ENCODE measurements at regions of chr19 and their contacts with region 1.

Region 1: DNA sequence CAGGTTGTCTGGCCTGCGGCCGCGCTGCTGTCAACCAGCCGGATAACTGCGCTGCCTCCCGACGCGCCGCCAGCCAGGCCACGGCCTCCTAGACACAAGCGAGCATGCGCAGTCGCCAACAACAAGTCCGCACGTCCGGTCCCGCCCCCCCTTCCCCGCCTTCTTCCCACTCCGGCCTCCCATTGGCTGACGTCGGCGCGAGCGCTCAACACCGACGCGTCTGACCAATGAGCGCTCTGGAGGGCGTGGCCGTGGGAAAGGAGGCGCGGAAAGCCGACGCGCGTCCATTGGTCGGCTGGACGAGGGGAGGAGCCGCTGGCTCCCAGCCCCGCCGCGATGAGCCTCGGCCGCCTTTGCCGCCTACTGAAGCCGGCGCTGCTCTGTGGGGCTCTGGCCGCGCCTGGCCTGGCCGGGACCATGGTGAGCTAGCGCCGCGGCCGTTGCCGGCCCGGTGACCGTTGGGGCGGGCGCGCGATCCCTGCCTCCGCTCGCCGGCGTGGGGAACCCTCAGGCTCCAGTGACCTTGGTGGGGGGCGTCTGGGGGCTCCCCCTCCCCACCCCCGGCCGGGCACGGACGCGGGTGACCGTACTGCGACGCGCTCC is at the start of gene GPX4:
- DNase-seq: peak; percentile 93
- ATAC-seq: peak; percentile 86
- H3K4me3 Mint-ChIP-seq: peak within 1 kb of the TSS; percentile 81
- H3K27ac Mint-ChIP-seq: peak within 1 kb of the TSS; percentile 83
- H3K4me1 Mint-ChIP-seq: peaks cover 55% of the 10 kb centered on the region
- H3K27me3 Mint-ChIP-seq: no peaks in the 10 kb centered on the region
- CTCF ChIP-seq: no peak
- total RNA-seq, gene GPX4: 213 and 218 TPM in 2 replicates

Region 2: GRCh38 chr19:925526-926322 is 178.1 kb before region 1 on chr19 and contains the start of gene ARID3A:
- CTCF ChIA-PET with region 1: no interaction called
- POLR2A ChIA-PET with region 1: no interaction called
- intact Hi-C with region 1: loop called (anchors 10 kb)
- DNase-seq: peak; percentile 84
- ATAC-seq: peak; percentile 66
- H3K4me3 Mint-ChIP-seq: peak within 1 kb of the TSS; percentile 86
- H3K27ac Mint-ChIP-seq: peak within 1 kb of the TSS; percentile 82
- H3K4me1 Mint-ChIP-seq: peaks cover 22% of the 10 kb centered on the region
- H3K27me3 Mint-ChIP-seq: no peaks in the 10 kb centered on the region
- CTCF ChIP-seq: no peak
- total RNA-seq, gene ARID3A: 67.7 and 74.9 TPM in 2 replicates

Region 3: DNA sequence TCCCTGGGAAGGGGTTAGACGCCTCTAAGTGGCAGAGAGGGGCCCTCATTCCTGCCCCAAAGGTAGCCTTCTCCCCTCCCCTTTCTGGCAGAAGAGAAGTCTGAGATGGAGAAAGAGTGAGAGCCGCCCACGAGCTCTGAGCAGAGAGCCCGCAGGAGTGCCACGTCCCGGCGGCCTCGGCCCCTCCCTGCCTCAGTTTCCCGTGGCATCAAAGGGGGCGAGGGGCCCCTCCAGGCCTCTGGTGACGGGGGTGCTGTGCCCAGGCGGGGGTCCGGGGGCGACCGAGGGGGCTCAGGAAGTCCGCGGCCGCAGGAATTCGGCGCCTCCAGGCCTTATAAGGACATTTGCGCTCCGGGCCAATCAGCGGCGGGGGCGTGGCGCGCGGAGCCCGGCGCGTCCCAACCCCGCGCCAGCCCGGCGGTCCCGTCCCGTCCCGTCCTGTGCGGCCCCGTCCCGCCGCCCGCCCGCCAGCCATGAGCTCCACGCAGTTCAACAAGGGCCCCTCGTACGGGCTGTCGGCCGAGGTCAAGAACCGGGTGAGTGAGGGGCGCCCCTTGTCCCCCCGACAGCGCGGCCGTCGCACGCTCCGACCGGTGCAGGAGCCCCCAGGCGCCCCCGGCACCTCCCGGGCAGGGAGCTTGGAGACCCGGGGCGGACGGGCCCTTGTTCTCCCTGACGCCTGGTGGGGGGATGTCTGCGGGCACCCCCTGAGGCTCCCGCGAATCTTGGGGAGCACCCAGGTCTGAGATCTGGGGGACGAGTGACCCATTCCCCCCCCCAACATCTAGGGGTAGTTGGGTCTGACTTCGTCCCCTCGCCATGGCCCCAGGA is 77.4 kb before region 1 on chr19 and contains the start of gene CNN2:
- CTCF ChIA-PET with region 1: interaction called, 3 read pairs
- POLR2A ChIA-PET with region 1: interaction called, 5 read pairs
- intact Hi-C with region 1: loop called (anchors 1 kb)
- DNase-seq: peak; percentile 76
- ATAC-seq: peak; percentile 61
- H3K4me3 Mint-ChIP-seq: peak within 1 kb of the TSS; percentile 95
- H3K27ac Mint-ChIP-seq: peak within 1 kb of the TSS; percentile 91
- H3K4me1 Mint-ChIP-seq: peaks cover 29% of the 10 kb centered on the region
- H3K27me3 Mint-ChIP-seq: no peaks in the 10 kb centered on the region
- CTCF ChIP-seq: no peak
- total RNA-seq, gene CNN2: 352 and 371 TPM in 2 replicates

Region 4: DNA sequence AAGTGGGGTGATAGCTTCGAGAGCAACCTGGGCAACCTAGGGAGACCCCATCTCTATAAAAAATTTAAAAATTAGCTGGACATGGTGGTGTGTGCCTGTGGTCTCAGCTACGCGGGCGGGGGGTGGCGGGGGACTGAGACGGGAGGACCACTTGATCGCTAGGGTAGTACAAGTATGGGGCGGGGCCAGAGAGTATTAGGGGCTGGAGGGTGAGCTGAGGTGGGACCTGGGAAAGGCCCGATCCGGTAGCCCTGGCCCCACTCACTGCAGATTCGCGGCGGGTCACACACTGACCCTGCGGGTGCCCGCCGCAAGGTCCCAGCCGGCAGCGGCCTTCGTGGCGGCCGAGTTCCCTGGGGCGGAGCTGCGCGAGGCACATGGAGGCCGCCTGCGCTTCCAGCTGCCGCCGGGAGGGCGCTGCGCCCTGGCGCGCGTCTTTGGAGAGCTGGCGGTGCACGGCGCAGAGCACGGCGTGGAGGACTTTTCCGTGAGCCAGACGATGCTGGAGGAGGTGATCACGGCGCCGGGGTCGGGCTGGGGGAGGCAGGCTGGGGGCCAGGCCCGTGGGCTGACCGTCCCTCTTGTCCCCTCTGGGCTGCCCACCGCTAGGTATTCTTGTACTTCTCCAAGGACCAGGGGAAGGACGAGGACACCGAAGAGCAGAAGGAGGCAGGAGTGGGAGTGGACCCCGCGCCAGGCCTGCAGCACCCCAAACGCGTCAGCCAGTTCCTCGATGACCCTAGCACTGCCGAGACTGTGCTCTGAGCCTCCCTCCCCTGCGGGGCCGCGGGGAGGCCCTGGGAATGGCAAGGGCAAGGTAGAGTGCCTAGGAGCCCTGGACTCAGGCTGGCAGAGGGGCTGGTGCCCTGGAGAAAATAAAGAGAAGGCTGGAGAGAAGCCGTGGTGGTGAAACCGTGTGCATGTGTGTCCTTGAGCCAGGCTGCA is 38.9 kb before region 1 on chr19:
- CTCF ChIA-PET with region 1: no interaction called
- POLR2A ChIA-PET with region 1: interaction called, 41 read pairs
- intact Hi-C with region 1: loop called (anchors 2 kb)
- DNase-seq: peak; percentile 68
- ATAC-seq: peak; percentile 36
- H3K4me3 Mint-ChIP-seq: peak overlapping the region; percentile 60
- H3K27ac Mint-ChIP-seq: no peak overlapping the region
- H3K4me1 Mint-ChIP-seq: peaks cover 38% of the 10 kb centered on the region
- H3K27me3 Mint-ChIP-seq: no peaks in the 10 kb centered on the region
- CTCF ChIP-seq: peak; percentile 33

Region 5: DNA sequence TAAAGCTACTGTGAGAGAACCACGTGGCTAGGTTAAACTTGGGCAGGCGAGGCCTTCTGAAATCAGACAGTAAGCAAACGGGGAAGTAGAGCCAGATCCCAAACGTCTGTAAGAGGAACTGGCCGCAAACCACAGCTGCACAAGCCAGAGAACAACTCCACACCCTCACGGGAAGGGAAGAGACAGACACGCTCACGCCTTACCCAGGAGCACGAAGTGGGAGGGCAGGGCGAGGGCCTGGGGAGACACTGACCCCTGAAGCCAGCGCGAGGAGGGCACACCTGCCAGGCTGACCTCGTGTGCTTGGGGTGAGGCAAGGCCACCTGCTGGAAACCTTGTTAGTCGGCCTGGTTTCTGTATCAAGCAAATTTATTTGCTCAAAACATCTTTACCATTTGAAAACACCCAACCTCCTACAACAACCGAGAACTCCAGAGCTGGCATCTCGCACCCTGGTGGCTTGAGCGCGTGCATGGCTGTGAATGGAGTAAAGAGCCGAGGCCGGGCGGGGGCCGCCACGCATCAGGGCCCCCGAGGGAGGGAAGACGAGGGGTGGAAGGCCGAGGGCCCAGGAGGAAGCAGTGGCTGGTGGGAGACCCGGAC is 15.9 kb before region 1 on chr19:
- CTCF ChIA-PET with region 1: no interaction called
- POLR2A ChIA-PET with region 1: interaction called, 29 read pairs
- intact Hi-C with region 1: no loop called
- DNase-seq: peak; percentile 45
- ATAC-seq: peak; percentile 64
- H3K4me3 Mint-ChIP-seq: peak overlapping the region; percentile 66
- H3K27ac Mint-ChIP-seq: peak overlapping the region; percentile 92
- H3K4me1 Mint-ChIP-seq: peaks cover 46% of the 10 kb centered on the region
- H3K27me3 Mint-ChIP-seq: no peaks in the 10 kb centered on the region
- CTCF ChIP-seq: no peak

Region 6: DNA sequence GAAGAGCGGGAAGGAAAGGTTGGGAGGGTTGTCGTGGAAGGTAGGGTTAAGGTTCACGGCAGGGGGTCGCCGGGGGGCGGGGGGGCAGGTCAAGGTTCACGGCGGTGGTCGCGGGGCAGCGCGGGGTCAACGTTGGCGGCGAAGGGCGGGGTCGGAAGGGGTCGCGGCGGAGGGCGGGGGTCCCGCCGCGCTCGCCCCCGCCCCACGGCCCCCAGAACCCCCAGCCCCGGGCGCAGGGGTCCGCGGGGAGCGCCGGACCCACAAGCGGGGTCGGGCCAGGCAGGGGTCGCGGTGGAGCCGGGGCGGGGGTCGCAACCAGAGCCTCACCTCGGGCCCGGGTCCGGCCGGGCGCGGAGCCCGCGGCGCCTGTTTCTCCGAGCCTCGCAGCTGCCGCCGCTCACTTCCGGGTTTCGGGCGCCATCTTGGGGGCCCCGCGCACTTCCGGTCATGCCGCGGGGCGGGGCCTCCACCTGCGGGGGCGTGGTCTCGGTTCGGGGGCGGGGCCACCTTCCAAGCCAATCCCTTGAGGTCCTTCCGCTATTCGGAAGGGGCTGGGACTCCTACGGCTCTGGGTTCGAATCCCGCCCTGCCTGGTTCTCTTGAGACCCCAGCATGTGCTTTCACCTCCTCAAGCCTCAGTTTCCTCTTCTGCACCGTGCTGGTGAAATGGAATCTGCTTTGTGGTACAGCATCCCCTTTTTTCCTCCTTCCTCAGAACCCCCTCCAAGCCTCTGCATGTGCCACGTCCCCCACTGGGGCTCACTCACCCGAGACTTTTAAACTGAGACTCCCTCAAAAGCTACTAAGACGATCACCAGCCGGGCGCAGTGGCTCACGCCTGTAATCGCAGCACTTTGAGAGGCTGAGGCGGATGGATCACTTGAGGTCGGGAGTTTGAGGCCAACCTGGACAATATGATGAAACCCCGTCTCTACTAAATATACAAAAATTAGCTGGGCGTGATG is 70.3 kb after region 1 on chr19 and contains the start of gene SBNO2:
- CTCF ChIA-PET with region 1: no interaction called
- POLR2A ChIA-PET with region 1: no interaction called
- intact Hi-C with region 1: loop called (anchors 5 kb)
- DNase-seq: peak; percentile 98
- ATAC-seq: peak; percentile 93
- H3K4me3 Mint-ChIP-seq: peak within 1 kb of the TSS; percentile 91
- H3K27ac Mint-ChIP-seq: peak within 1 kb of the TSS; percentile 89
- H3K4me1 Mint-ChIP-seq: peaks cover 26% of the 10 kb centered on the region
- H3K27me3 Mint-ChIP-seq: no peaks in the 10 kb centered on the region
- CTCF ChIP-seq: no peak
- total RNA-seq, gene SBNO2: 111 and 127 TPM in 2 replicates

Measured in activated B cell treated with CpG ODN at 0.5 μM for 24 hours (primary cell).